Posterior vena cava (tissue), 2 donors: ENCODE measurements at regions of chr15 and their contacts with region 1.

Region 1: GRCh38 chr15:82699726-82700125 is 9.9 kb downstream of the AP3B2 start:
- DNase-seq: no peak

Region 2: GRCh38 chr15:81323944-81324881 is 1375.5 kb before region 1 on chr15 and contains the start of gene STARD5:
- intact Hi-C with region 1: no loop called
- DNase-seq: peak; percentile 100
- total RNA-seq, gene STARD5: 3.9 to 5.9 TPM

Region 3: GRCh38 chr15:82680200-82681102 is 19.3 kb before region 1 on chr15:
- intact Hi-C with region 1: loop called in 1 of 2 experiments (anchors 1 kb)
- DNase-seq: peak; percentile 78